ENCODE measurements at regions of chr5 and their contacts with region 1.

Region 1: DNA sequence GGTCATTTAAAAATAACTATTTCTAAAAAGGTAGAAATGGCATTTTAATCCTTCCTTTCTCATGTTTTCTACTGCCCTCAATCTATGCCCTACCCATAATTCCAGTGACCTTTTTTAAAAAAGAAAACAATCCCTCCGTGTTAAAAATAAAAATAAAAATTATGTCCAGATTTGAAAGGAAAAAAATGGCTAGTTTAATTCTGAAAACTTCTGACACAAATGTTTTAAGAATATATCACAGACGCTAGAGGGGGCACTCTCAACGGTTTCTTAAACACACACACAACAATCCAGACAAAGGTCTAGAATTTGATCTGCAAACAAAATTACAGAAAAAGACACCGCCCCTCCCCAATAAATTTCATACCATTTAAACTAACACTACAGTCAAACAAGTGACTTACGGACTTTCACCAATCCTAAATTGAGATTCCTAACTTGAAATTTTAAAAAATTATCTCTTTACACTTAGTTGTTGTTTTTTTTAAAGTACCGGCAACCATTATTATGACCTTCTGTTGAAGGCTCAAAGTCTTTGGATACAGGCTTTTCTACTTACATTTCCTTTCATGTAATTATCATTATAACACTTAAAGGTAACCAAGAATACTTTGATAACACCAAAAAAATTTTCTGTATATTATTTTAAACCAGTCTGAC is 38.2 kb downstream of the CLINT1 start:
- DNase-seq: peak; percentile 65
- ATAC-seq: peak; percentile 20; the same call in 1 of the 2 replicates
- H3K4me3 ChIP-seq: no peak overlapping the region
- H3K27ac ChIP-seq: no peak overlapping the region
- H3K4me1 ChIP-seq: peaks cover 13% of the 10 kb centered on the region
- H3K27me3 ChIP-seq: no peaks in the 10 kb centered on the region
- CTCF ChIP-seq: peak; percentile 61
- POLR2A ChIP-seq: no peak
- RAD21 ChIP-seq: peak; percentile 29; the same call in 1 of the 2 replicates

Region 2: DNA sequence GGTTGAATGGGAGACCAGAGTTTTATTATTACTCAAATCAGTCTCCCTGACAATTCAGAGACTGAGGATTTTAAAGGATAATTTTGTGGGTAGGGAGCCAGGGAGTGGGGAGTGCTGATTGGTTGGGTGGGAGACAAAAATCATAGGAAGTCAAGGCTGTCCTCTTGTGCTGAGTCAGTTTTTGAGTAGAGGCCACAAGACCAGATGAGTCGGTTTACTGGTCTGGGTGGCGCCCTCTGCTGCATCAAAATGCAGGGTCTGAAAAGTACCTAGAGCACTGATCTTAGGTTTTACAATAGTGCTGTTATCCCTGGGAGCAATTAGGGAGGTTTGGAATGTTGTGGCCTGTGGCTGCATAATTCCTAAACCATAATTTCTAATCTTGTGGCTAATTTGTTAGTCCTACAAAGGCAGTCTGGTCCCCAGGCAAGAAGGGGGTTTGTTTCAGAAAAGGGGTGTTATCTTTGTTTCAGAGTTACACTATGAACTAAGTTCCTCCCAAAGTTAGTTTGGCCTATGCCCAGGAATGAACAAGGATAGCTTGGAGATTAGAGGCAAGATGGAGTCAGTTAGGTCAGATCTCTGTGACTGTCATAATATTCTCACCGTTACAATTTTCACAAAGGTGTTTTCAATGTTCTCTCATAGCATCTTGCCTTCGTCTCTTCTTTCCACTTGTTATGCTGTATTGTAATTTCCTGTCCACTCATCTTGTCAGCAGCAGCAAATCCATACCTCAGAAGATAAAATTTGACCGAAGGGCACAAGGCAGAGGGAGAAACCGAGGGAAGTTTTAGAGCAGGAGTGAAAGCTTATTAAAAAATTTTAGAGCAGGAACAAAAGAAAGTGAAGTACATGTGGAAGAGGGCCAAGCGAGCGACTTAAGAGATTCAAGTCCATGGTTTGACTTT is 97.4 kb after region 1 on chr5:
- CTCF ChIA-PET with region 1: interaction called, 3 read pairs
- POLR2A ChIA-PET with region 1: no interaction called
- dilution Hi-C with region 1: no loop called
- in situ Hi-C with region 1: no loop called
- intact Hi-C with region 1: loop called (anchors 1 kb)
- DNase-seq: peak; percentile 75
- ATAC-seq: peak; percentile 86
- H3K4me3 ChIP-seq: no peak overlapping the region
- H3K27ac ChIP-seq: no peak overlapping the region
- H3K4me1 ChIP-seq: no peaks in the 10 kb centered on the region
- H3K27me3 ChIP-seq: peaks cover 8% of the 10 kb centered on the region
- CTCF ChIP-seq: peak; percentile 61
- POLR2A ChIP-seq: no peak
- RAD21 ChIP-seq: peak; percentile 60

Region 3: DNA sequence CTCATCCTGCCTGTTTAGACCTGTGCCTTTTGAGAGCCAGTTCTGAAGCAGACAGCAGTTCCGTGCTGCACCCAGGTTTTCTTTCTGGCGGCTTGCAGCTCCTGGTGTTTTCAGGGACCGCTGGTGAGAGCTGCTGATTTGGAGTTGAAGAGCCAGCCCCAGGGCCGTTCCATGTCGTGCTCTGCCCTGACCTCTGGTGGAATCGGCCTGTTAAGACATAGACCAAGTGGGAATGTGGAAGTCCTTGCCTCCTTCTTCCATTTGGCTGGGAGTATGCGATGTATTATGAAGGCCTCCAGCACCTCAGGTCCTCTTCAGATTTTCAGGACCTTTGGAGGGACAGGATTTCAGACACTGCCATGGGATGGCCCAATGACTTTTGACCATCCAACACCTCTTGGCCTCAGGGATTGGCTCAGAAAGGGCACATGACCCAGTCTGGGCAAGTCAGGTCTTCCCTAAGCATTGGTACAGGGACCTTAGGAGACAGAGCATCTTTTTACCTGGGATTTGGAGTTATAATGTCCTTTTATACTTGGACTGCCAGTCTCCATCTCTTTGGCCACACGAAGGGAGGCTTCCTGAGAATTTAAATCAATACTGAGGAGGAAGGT is 174.3 kb after region 1 on chr5:
- CTCF ChIA-PET with region 1: interaction called, 3 read pairs
- POLR2A ChIA-PET with region 1: no interaction called
- dilution Hi-C with region 1: loop called (anchors 25 kb)
- in situ Hi-C with region 1: no loop called
- intact Hi-C with region 1: loop called (anchors 1 kb)
- DNase-seq: peak; percentile 54
- ATAC-seq: peak; percentile 100
- H3K4me3 ChIP-seq: no peak overlapping the region
- H3K27ac ChIP-seq: no peak overlapping the region
- H3K4me1 ChIP-seq: no peaks in the 10 kb centered on the region
- H3K27me3 ChIP-seq: no peaks in the 10 kb centered on the region
- CTCF ChIP-seq: peak; percentile 69
- POLR2A ChIP-seq: no peak
- RAD21 ChIP-seq: peak; percentile 73

Region 4: DNA sequence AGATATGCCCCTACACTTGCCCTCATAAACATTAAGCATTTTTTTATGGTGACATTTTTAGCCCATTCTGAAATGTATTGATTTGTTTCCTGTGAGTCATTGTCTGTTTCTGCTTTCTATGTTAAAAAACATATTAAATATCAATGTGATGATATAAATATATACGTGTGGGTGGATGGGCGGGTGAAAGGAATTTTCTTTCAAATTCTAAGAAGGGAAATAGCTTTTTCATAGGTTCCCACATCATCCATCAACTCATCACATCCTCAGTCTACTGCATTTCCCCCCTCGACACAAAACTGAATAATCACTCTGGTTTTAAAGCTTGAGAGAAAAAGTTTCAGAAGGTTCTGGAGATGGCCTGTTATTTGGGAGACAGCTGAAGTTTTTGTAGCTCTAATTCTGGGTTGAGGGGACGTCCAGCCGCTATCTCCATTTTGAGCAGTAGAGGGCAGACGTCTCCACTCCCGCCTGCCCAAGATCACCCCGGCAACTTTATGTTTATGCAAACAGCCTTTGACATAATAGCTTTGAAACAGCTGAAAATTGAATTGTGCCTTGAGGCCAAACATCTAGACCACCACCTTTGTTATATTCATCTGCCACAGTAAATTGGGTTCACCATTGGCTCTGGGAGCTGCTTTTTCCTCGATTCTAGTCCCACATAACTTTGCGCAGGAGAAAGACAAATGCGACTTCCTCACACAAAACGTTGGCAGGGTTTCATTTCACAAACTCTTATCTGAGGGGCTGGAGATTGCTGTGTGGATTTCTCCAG is 254.5 kb after region 1 on chr5:
- CTCF ChIA-PET with region 1: interaction called, 3 read pairs
- POLR2A ChIA-PET with region 1: no interaction called
- dilution Hi-C with region 1: no loop called
- in situ Hi-C with region 1: no loop called
- intact Hi-C with region 1: loop called (anchors 5 kb)
- DNase-seq: peak; percentile 61
- ATAC-seq: peak; percentile 98
- H3K4me3 ChIP-seq: peak overlapping the region; percentile 20; the same call in 1 of the 2 replicates
- H3K27ac ChIP-seq: no peak overlapping the region
- H3K4me1 ChIP-seq: no peaks in the 10 kb centered on the region
- H3K27me3 ChIP-seq: no peaks in the 10 kb centered on the region
- CTCF ChIP-seq: peak; percentile 75
- POLR2A ChIP-seq: no peak
- RAD21 ChIP-seq: peak; percentile 59

Region 5: GRCh38 chr5:159106569-159107282 is 1286.0 kb after region 1 on chr5:
- CTCF ChIA-PET with region 1: no interaction called
- POLR2A ChIA-PET with region 1: no interaction called
- dilution Hi-C with region 1: no loop called
- in situ Hi-C with region 1: no loop called
- intact Hi-C with region 1: loop called (anchors 10 kb)
- DNase-seq: peak; percentile 52
- ATAC-seq: peak; percentile 95
- H3K4me3 ChIP-seq: no peak overlapping the region
- H3K27ac ChIP-seq: no peak overlapping the region
- H3K4me1 ChIP-seq: no peaks in the 10 kb centered on the region
- H3K27me3 ChIP-seq: peaks cover 49% of the 10 kb centered on the region
- CTCF ChIP-seq: peak; percentile 90
- POLR2A ChIP-seq: peak; percentile 53
- RAD21 ChIP-seq: peak; percentile 94

Measured in IMR-90 (cell line).